Activated CD4-positive, alpha-beta memory T cell treated with anti-CD3 and anti-CD28 coated beads for 36 hours (primary cell): ENCODE measurements at regions of chr2 and their contacts with region 1.

Region 1: DNA sequence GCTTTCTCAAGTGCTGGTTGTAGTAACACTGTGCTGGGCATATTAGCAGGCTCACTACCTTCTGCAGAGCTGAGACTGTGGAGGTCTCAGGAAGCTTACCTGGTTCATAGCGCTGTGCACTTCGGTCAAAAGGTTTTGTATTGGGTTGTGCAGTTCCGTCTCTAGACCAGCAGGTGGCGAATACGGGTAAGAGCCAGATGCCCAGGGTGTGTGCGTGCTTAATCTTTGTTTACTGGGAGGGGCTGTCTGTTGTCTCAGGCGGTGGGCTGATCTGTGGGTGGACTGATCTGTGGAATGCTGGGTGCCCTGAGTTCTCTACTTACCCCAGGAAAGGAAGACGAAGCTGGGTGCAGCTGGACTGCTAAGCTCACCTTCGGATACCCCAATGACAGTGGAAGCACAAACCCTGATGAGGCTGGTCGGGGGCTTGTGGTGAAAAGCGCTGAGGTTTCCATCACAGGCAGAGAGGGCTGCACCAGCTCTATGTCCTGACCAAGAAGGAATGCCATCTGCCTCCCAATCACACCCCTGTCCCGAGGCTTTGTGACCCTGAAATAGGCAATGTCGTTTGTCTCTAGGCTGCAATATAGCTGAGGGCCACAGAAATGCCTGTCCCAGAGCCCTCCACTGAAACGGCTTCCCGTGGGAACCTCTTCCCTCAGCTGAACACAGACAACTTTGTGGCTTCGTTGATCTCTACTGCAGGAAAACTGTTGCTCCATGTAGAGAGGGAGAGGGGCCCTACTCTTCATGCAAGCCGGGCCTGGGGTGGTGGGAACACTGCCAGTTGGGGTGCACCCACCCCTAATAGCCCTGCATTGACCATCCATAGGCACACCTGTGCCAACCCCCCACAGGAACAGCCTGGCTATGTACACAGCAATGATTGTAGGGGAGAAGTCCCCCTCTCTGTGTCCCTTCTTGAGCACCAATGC is 45.9 kb upstream of the FAM117B start:
- DNase-seq: peak; percentile 77
- H3K4me3 Mint-ChIP-seq: no peak overlapping the region
- H3K27ac Mint-ChIP-seq: no peak overlapping the region
- H3K4me1 Mint-ChIP-seq: peaks cover 7% of the 10 kb centered on the region
- H3K27me3 Mint-ChIP-seq: peaks cover 2% of the 10 kb centered on the region

Region 2: GRCh38 chr2:202574541-202574940 is 14.4 kb before region 1 on chr2:
- CTCF ChIA-PET with region 1: interaction called, 12 read pairs
- POLR2A ChIA-PET with region 1: no interaction called
- intact Hi-C with region 1: no loop called
- DNase-seq: no peak
- H3K4me3 Mint-ChIP-seq: no peak overlapping the region
- H3K27ac Mint-ChIP-seq: no peak overlapping the region
- H3K4me1 Mint-ChIP-seq: no peaks in the 10 kb centered on the region
- H3K27me3 Mint-ChIP-seq: no peaks in the 10 kb centered on the region

Region 3: DNA sequence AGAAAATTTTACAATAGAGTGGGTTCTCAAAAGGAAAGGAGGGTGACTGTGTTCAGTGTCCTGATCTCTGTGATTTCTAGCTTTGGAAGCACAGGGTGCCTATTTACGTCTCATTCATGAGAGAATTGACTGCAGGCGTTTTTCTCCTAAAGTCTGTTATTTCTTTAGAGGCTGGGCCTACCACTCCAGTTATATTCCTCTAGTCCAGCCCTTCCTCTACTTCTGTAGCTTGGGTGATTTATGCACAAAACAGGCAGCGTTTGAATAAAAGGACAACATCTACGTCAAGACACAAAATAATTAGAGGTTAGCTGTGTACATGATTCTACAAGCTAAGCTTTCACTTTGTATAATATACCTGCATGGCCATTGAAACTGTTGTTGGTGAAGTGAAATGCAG is 13.4 kb after region 1 on chr2:
- CTCF ChIA-PET with region 1: interaction called, 20 read pairs
- POLR2A ChIA-PET with region 1: no interaction called
- intact Hi-C with region 1: no loop called
- DNase-seq: no peak
- H3K4me3 Mint-ChIP-seq: no peak overlapping the region
- H3K27ac Mint-ChIP-seq: no peak overlapping the region
- H3K4me1 Mint-ChIP-seq: peaks cover 3% of the 10 kb centered on the region
- H3K27me3 Mint-ChIP-seq: no peaks in the 10 kb centered on the region

Region 4: GRCh38 chr2:202703091-202703490 is 114.2 kb after region 1 on chr2:
- CTCF ChIA-PET with region 1: no interaction called
- POLR2A ChIA-PET with region 1: no interaction called
- intact Hi-C with region 1: loop called (anchors 5 kb)
- DNase-seq: no peak
- H3K4me3 Mint-ChIP-seq: no peak overlapping the region
- H3K27ac Mint-ChIP-seq: peak overlapping the region; percentile 0
- H3K4me1 Mint-ChIP-seq: peaks cover 60% of the 10 kb centered on the region
- H3K27me3 Mint-ChIP-seq: no peaks in the 10 kb centered on the region

Region 5: GRCh38 chr2:202870431-202871299 is 281.8 kb after region 1 on chr2:
- CTCF ChIA-PET with region 1: interaction called, 64 read pairs
- POLR2A ChIA-PET with region 1: no interaction called
- intact Hi-C with region 1: loop called (anchors 1 kb)
- DNase-seq: peak; percentile 81
- H3K4me3 Mint-ChIP-seq: peak overlapping the region; percentile 88
- H3K27ac Mint-ChIP-seq: peak overlapping the region; percentile 61
- H3K4me1 Mint-ChIP-seq: peaks cover 7% of the 10 kb centered on the region
- H3K27me3 Mint-ChIP-seq: no peaks in the 10 kb centered on the region